BJ (cell line): ENCODE measurements at regions of chr20 and their contacts with region 1.

Region 1: DNA sequence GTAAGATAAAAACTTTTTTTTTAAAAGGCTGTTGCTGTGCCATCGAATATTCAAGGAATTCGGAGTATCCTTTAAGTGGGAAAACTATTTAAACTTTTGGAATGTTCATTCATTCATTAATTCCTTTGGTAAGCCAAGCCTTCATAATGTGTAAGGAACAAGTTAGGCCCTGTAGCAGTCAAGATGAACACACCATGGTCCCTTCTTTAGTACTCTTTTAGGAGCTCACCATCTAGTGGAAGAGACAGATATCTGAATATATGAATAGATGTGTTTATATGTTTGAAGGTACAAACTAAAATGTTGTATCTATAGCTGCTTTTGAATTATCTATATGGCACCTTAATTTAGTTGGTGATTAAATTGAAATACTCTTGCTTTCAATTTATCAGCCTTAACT is 5.8 kb downstream of the SPO11 start:
- DNase-seq: no peak
- H3K4me3 ChIP-seq: no peak overlapping the region
- H3K27me3 ChIP-seq: no peaks in the 10 kb centered on the region
- CTCF ChIP-seq: no peak

Region 2: GRCh38 chr20:57089691-57090150 is 245.7 kb before region 1 on chr20:
- CTCF ChIA-PET with region 1: interaction called, 127 read pairs
- POLR2A ChIA-PET with region 1: no interaction called
- DNase-seq: no peak
- H3K4me3 ChIP-seq: no peak overlapping the region
- H3K27me3 ChIP-seq: peaks cover 2% of the 10 kb centered on the region
- CTCF ChIP-seq: peak; percentile 97

Region 3: DNA sequence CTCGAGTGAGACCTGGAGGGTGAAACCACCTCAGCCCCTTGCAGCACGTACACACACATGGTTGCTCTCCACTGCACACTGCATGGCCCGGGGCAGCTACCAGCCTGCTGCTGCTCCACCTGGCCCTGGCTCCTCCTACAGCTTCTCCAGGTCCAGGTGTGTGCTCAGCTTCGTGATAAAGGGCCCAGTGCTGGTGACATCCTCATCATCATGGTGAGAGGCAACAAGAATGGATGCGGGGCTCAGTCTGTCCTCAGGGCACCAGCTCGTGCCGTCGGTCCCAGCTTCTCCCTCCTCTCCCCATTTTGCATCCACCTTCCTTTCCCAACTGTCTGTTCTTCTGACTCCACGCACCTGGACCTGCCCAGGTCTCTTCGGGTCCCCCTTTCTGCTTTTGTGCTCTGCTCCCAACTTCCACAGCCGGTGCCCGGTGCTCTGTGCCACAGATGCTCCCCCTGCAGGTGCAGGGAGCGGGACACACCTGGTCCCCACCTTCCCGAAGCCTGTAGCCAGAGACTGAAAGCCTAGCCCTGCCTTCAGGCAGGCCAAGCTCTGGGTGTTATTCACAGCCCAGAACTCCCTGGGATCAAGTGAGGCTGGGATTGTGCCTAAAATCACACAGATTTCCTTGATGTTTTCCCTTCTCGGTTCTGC is 44.5 kb before region 1 on chr20:
- CTCF ChIA-PET with region 1: no interaction called
- POLR2A ChIA-PET with region 1: no interaction called
- DNase-seq: no peak
- H3K4me3 ChIP-seq: no peak overlapping the region
- H3K27me3 ChIP-seq: peaks cover 27% of the 10 kb centered on the region
- CTCF ChIP-seq: no peak